WTC11 (cell line): ENCODE measurements at regions of chr3 and their contacts with region 1.

Region 1: DNA sequence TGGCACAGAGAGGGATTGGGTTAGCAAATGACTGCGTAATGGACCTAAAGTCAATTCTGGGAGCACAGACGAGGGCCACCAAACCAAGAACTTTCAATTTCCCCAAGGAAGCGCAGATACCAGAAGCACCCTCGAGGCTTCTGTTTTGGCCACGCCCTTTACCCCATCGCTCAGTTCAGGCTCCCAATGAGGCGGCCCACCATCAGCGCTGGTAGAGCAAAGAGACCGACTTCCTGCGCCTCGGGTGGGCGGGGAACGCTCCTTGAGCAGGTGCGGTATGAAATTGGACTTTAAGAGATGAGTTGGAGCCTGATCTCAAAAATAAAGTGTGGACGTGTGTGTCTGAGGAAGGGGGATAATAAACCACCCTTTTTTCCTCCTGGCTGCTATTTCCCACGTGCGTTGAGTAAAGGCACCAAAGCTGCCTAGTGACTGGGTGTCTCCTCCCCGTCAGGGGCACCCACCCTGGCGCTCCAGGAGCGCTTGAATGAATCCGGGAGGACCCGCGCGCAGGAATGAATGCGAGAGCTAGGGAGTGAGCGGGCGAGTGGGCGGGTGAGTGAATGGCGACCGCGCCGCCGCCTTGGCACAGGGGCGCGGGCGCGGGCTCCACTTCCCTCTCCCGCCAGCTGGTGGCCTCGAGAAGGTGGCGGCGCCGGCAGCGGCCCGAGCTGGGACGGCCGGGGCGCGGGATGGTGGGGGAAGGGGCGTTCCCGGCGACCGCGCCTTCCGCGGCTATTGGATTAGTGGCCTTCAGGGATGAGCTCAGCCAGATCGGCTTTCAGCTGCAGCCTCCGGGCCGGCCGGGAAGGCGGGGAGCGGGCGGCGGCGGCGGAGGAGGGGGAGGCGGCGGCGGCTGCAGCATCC is at the start of gene SPSB4:
- DNase-seq: peak; percentile 91
- ATAC-seq: peak; percentile 80
- H3K4me3 Mint-ChIP-seq: peak within 1 kb of the TSS; percentile 92
- H3K27ac Mint-ChIP-seq: peak within 1 kb of the TSS; percentile 46
- H3K4me1 Mint-ChIP-seq: peaks cover 20% of the 10 kb centered on the region
- H3K27me3 Mint-ChIP-seq: peaks cover 30% of the 10 kb centered on the region
- CTCF ChIP-seq: 0 out of 2 replicates have a peak, but pooled peaks have one; percentile 13
- total RNA-seq, gene SPSB4: 19.4 to 19.7 TPM (median 19.6 TPM) in 3 replicates

Region 2: DNA sequence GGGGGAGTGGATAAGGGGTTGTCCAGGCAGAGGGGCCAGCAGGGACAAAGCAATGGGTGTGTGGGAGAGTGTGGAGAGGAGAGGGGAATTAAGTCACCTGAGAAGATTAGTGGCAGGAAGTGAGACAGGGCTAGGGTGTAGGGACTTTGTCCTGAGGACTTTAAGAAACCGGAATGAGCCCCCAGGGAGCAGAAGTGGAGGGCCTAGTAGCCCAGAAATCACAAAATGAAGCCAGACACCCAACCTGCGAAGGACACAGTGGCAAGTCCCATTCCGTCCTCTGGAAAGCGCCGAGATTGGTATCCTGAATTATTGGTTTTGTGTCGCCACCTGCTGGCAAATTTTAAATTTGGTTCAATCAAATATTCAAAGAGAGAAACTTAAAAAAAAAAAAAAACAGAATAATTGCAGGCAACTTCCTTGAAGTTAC is 187.2 kb before region 1 on chr3:
- CTCF ChIA-PET with region 1: no interaction called
- POLR2A ChIA-PET with region 1: no interaction called
- DNase-seq: peak; percentile 58
- ATAC-seq: peak; percentile 85
- H3K4me3 Mint-ChIP-seq: no peak overlapping the region
- H3K27ac Mint-ChIP-seq: no peak overlapping the region
- H3K4me1 Mint-ChIP-seq: peaks cover 16% of the 10 kb centered on the region
- H3K27me3 Mint-ChIP-seq: no peaks in the 10 kb centered on the region
- CTCF ChIP-seq: peak; percentile 49

Region 3: GRCh38 chr3:140931801-140932200 is 119.0 kb before region 1 on chr3:
- CTCF ChIA-PET with region 1: no interaction called
- POLR2A ChIA-PET with region 1: no interaction called
- DNase-seq: no peak
- ATAC-seq: no peak
- H3K4me3 Mint-ChIP-seq: peak overlapping the region; percentile 86; the same call in 1 of the 2 replicates
- H3K27ac Mint-ChIP-seq: no peak overlapping the region
- H3K4me1 Mint-ChIP-seq: no peaks in the 10 kb centered on the region
- H3K27me3 Mint-ChIP-seq: peaks cover 23% of the 10 kb centered on the region
- CTCF ChIP-seq: no peak

Region 4: GRCh38 chr3:141011232-141011996 is 39.4 kb before region 1 on chr3:
- CTCF ChIA-PET with region 1: interaction called, 25 read pairs
- POLR2A ChIA-PET with region 1: interaction called, 3 read pairs
- DNase-seq: peak; percentile 95
- ATAC-seq: peak; percentile 96
- H3K4me3 Mint-ChIP-seq: no peak overlapping the region
- H3K27ac Mint-ChIP-seq: no peak overlapping the region
- H3K4me1 Mint-ChIP-seq: peaks cover 24% of the 10 kb centered on the region
- H3K27me3 Mint-ChIP-seq: no peaks in the 10 kb centered on the region; the same call in 1 of the 2 replicates
- CTCF ChIP-seq: peak; percentile 81

Region 5: GRCh38 chr3:141063831-141064230 is 13.0 kb after region 1 on chr3:
- CTCF ChIA-PET with region 1: interaction called, 114 read pairs
- POLR2A ChIA-PET with region 1: interaction called, 3 read pairs
- DNase-seq: no peak
- ATAC-seq: peak; percentile 57
- H3K4me3 Mint-ChIP-seq: no peak overlapping the region
- H3K27ac Mint-ChIP-seq: peak overlapping the region; percentile 37; the same call in 1 of the 2 replicates
- H3K4me1 Mint-ChIP-seq: peaks cover 36% of the 10 kb centered on the region
- H3K27me3 Mint-ChIP-seq: no peaks in the 10 kb centered on the region
- CTCF ChIP-seq: no peak

Region 6: DNA sequence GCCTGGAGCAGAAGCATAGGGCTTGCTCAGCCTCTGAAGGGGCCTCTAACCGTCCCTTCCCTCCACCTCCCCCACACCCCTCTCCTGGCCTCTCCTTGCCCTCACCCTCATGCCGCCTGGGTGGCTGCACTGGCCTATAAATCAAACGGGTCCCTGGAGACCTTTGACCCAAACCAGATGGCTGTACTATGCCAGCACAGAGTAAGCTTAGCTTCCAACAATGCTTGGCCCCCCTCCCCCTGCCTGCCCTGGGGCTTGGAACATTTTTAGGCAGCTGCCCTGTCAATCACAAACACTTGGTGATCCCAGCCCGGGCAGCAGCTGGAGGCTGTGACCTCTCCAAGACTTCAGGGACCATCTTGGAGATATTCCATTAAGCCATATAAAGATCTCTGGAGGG is 33.4 kb after region 1 on chr3:
- CTCF ChIA-PET with region 1: interaction called, 22 read pairs
- POLR2A ChIA-PET with region 1: no interaction called
- DNase-seq: no peak
- ATAC-seq: no peak
- H3K4me3 Mint-ChIP-seq: no peak overlapping the region
- H3K27ac Mint-ChIP-seq: no peak overlapping the region
- H3K4me1 Mint-ChIP-seq: peaks cover 91% of the 10 kb centered on the region
- H3K27me3 Mint-ChIP-seq: no peaks in the 10 kb centered on the region
- CTCF ChIP-seq: no peak

Region 7: GRCh38 chr3:141114816-141115460 is 64.1 kb after region 1 on chr3:
- CTCF ChIA-PET with region 1: interaction called, 46 read pairs
- POLR2A ChIA-PET with region 1: interaction called, 3 read pairs
- DNase-seq: peak; percentile 63
- ATAC-seq: peak; percentile 99
- H3K4me3 Mint-ChIP-seq: no peak overlapping the region
- H3K27ac Mint-ChIP-seq: no peak overlapping the region; the same call in 1 of the 2 replicates
- H3K4me1 Mint-ChIP-seq: peaks cover 4% of the 10 kb centered on the region; the same call in 1 of the 2 replicates
- H3K27me3 Mint-ChIP-seq: no peaks in the 10 kb centered on the region
- CTCF ChIP-seq: peak; percentile 36

Region 8: GRCh38 chr3:141174674-141175073 is 123.9 kb after region 1 on chr3:
- CTCF ChIA-PET with region 1: no interaction called
- POLR2A ChIA-PET with region 1: no interaction called
- DNase-seq: no peak
- ATAC-seq: peak; percentile 16; the same call in 1 of the 2 replicates
- H3K4me3 Mint-ChIP-seq: no peak overlapping the region
- H3K27ac Mint-ChIP-seq: no peak overlapping the region
- H3K4me1 Mint-ChIP-seq: peaks cover 18% of the 10 kb centered on the region
- H3K27me3 Mint-ChIP-seq: no peaks in the 10 kb centered on the region
- CTCF ChIP-seq: no peak

Region 9: GRCh38 chr3:141192345-141192744 is 141.5 kb after region 1 on chr3:
- CTCF ChIA-PET with region 1: interaction called, 18 read pairs
- POLR2A ChIA-PET with region 1: no interaction called
- DNase-seq: peak; percentile 100
- ATAC-seq: peak; percentile 98
- H3K4me3 Mint-ChIP-seq: no peak overlapping the region
- H3K27ac Mint-ChIP-seq: no peak overlapping the region
- H3K4me1 Mint-ChIP-seq: no peaks in the 10 kb centered on the region
- H3K27me3 Mint-ChIP-seq: peaks cover 16% of the 10 kb centered on the region
- CTCF ChIP-seq: peak; percentile 98